ENCODE measurements at regions of chrX and their contacts with region 1.

Region 1: DNA sequence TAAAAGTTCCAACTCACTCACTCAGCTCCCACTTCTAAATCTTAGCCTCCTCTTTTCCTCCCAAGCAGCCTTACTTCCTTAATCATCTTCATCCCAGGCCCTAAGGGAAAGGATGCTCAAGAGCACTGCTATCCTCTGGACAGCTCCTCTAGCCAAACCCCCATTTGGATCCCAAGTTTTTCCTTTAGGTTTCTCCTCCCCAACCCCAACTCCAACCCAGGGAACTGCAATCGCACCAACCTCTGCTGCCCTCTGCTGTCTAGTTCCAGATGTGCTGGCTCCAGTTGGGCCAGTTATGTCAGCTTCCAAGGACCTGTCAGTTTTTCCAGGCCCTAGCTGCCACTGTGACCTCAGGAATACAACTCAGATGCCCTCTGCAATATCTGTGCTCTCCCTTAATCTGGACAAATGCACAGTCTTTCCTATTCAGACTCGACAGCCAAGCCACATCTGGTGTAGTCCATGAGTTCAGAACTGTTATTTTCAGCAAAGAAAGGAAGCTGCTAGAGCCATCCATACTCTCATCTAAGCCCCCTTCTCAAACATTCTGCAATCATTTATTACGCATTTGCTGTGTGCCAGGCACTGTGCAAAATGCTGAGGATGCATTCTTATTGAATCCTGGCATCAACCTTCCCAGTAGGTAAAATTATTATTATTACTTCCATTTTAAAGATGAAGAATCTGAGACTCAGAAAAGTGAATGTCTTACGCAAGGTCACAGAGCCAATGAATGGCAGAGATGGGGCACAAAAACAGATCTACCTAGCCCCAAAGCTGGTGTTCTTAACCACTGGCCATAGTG is 12.3 kb upstream of the XPNPEP2 start:
- DNase-seq: peak; percentile 76
- H3K4me3 ChIP-seq: no peak overlapping the region
- H3K27ac ChIP-seq: no peak overlapping the region
- H3K4me1 ChIP-seq: peaks cover 43% of the 10 kb centered on the region
- H3K27me3 ChIP-seq: no peaks in the 10 kb centered on the region
- CTCF ChIP-seq: peak; percentile 64 to 74
- POLR2A ChIP-seq: no peak

Region 2: GRCh38 chrX:129622757-129623341 is 103.7 kb before region 1 on chrX:
- CTCF ChIA-PET with region 1: interaction called, 20 read pairs
- POLR2A ChIA-PET with region 1: no interaction called
- dilution Hi-C with region 1: no loop called
- intact Hi-C with region 1: loop called (anchors 1 kb)
- DNase-seq: peak; percentile 85
- H3K4me3 ChIP-seq: no peak overlapping the region
- H3K27ac ChIP-seq: peak overlapping the region; percentile 99
- H3K4me1 ChIP-seq: peaks cover 18% of the 10 kb centered on the region
- H3K27me3 ChIP-seq: no peaks in the 10 kb centered on the region
- CTCF ChIP-seq: no peak
- POLR2A ChIP-seq: no peak

Region 3: GRCh38 chrX:129642641-129643040 is 83.9 kb before region 1 on chrX:
- CTCF ChIA-PET with region 1: interaction called, 142 read pairs
- POLR2A ChIA-PET with region 1: interaction called, 4 read pairs
- dilution Hi-C with region 1: no loop called
- intact Hi-C with region 1: loop called (anchors 1 kb)
- DNase-seq: no peak
- H3K4me3 ChIP-seq: no peak overlapping the region
- H3K27ac ChIP-seq: no peak overlapping the region
- H3K4me1 ChIP-seq: peaks cover 4% of the 10 kb centered on the region
- H3K27me3 ChIP-seq: no peaks in the 10 kb centered on the region
- CTCF ChIP-seq: no peak
- POLR2A ChIP-seq: no peak

Region 4: GRCh38 chrX:129665910-129666644 is 60.4 kb before region 1 on chrX:
- CTCF ChIA-PET with region 1: interaction called, 20 read pairs
- POLR2A ChIA-PET with region 1: interaction called, 3 read pairs
- dilution Hi-C with region 1: no loop called
- intact Hi-C with region 1: loop called (anchors 1 kb)
- DNase-seq: peak; percentile 87
- H3K4me3 ChIP-seq: no peak overlapping the region
- H3K27ac ChIP-seq: peak overlapping the region; percentile 88
- H3K4me1 ChIP-seq: peaks cover 56% of the 10 kb centered on the region
- H3K27me3 ChIP-seq: no peaks in the 10 kb centered on the region
- CTCF ChIP-seq: no peak
- POLR2A ChIP-seq: peak; percentile 2

Region 5: DNA sequence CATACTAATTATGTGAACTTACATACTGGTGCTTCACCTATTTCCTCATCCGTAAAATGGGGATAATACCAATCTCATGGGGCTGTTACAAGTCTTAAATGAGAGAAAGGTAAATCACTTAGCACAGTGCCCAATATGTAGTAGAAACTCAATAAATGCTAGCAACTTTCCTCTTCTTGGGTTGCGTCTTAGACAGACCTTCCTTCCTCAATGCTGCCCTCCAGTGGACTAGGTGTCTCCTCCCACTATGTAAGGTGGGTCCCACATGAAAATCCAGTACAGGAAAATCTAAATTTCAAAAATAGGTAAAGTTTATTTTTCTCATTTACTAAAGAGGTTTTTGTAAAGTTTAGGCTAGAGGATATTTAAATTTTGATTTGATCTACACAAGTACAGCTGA is 96.6 kb after region 1 on chrX:
- CTCF ChIA-PET with region 1: interaction called, 11 read pairs
- POLR2A ChIA-PET with region 1: no interaction called
- dilution Hi-C with region 1: no loop called
- intact Hi-C with region 1: loop called (anchors 1 kb)
- DNase-seq: peak; percentile 44
- H3K4me3 ChIP-seq: no peak overlapping the region
- H3K27ac ChIP-seq: no peak overlapping the region
- H3K4me1 ChIP-seq: no peaks in the 10 kb centered on the region
- H3K27me3 ChIP-seq: no peaks in the 10 kb centered on the region
- CTCF ChIP-seq: peak; percentile 26 to 36
- POLR2A ChIP-seq: no peak

Region 6: GRCh38 chrX:130060122-130061069 is 333.9 kb after region 1 on chrX:
- CTCF ChIA-PET with region 1: interaction called, 10 read pairs
- POLR2A ChIA-PET with region 1: no interaction called
- dilution Hi-C with region 1: no loop called
- intact Hi-C with region 1: no loop called
- DNase-seq: peak; percentile 59
- H3K4me3 ChIP-seq: peak overlapping the region; percentile 28 to 51 (median 31)
- H3K27ac ChIP-seq: peak overlapping the region; percentile 48
- H3K4me1 ChIP-seq: peaks cover 7% of the 10 kb centered on the region
- H3K27me3 ChIP-seq: no peaks in the 10 kb centered on the region
- CTCF ChIP-seq: peak; percentile 62 to 69
- POLR2A ChIP-seq: no peak

Measured in endothelial cell of umbilical vein (primary cell).